ENCODE measurements at regions of chr18 and their contacts with region 1.

Region 1: DNA sequence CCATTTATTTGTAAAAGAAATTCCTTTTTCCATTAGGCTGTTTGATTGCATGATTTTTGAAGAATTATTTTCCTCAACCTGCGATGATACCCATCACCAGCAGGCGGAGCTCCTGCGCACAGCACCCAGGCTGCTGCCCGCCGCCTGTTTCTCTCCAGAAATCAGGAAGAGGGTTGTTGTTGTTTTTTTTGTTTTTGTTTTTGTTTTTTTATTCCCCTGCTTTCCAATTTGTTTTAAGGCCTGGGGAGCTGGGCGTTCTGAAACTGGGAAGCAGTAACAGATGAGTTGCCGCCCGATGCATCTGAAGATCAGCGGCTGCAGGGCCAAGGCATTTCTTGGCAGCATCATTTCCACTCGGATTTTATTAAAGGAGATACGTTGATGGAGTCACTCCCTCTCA is 132.1 kb downstream of the MBP start:
- DNase-seq: peak; percentile 60
- ATAC-seq: no peak
- H3K4me3 Mint-ChIP-seq: no peak overlapping the region
- H3K27ac Mint-ChIP-seq: peak overlapping the region; percentile 42
- H3K4me1 Mint-ChIP-seq: peaks cover 37% of the 10 kb centered on the region
- H3K27me3 Mint-ChIP-seq: no peaks in the 10 kb centered on the region

Region 2: DNA sequence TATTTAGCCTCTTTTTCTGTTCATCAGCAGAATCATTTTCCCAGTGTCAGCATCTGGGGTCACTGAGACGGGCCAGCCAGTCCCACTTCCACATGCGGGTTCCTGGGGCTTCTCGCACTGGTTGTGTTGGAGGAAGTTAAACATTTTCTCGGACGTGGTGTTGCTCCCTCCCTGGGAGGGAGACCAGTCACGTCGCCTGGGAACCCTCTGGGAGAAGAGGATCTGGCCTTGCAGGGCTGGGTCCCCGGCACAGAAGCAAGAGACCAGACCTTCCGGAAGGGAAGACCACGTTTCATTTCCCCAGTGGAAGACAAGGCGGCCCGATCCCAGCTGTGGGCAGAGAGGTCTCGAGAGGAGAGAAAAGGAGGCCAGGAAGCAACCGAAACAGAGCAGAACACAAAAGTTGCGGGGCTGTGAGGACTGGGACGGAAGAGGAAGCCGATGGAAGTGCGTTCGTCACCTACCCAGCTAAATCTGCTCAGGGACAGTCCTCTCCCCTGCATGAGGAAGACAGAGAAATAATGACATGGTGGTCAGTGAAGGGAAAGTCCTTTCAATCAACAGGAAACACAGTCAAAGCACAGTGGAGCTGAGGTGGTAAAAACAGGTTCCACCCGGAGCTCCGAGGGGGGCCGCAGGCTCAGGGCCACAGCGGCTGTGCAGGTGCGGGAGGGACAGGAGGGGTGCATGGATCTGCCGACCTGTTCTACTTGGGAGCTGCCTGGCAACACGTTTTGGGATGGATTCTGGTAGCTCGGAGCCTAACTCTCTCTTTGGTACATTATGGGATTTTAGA is 12.3 kb before region 1 on chr18:
- CTCF ChIA-PET with region 1: interaction called, 24 read pairs
- DNase-seq: no peak
- ATAC-seq: no peak
- H3K4me3 Mint-ChIP-seq: no peak overlapping the region
- H3K27ac Mint-ChIP-seq: no peak overlapping the region
- H3K4me1 Mint-ChIP-seq: peaks cover 6% of the 10 kb centered on the region
- H3K27me3 Mint-ChIP-seq: no peaks in the 10 kb centered on the region

Region 3: DNA sequence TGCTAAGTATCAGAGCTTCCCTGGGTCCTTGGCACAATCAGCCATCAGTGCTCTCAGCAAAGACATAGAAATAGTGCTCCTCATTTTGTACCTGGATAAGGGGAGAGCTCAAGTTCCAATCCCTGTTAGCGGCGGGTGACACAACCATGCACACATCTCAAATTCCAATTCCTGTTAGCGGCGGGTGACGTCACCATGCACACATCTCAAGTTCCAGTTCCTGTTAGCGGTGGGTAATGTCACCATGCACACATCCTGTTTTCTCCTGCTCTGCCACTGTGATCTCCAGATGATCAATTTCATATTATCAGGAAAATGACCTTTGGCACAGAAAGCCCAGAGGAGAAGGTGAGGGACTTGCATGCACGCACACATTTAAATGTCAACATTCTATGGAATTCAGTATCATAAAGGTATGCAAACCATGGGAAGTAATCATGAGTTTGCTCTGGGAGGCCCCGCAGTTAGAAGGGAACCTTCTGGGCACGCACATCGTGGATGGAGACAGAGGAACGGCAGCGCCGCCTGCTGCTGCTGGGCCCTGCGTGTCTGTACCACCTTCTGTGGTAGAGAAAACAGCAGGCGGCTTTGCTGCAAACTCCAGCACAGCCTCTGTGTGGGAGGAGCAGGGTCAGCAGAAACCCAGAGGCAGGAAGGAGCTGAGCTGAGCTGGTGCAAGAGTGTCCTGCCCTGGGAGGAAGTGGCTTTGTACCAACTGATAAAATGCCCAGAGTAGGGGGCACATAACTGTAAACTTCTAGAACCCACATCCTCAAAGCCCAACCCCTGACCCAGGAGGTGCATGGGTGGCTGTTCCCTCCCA is 54.3 kb after region 1 on chr18:
- CTCF ChIA-PET with region 1: interaction called, 97 read pairs
- DNase-seq: peak; percentile 95
- ATAC-seq: peak; percentile 88
- H3K4me3 Mint-ChIP-seq: peak overlapping the region; percentile 72
- H3K27ac Mint-ChIP-seq: peak overlapping the region; percentile 91
- H3K4me1 Mint-ChIP-seq: peaks cover 64% of the 10 kb centered on the region
- H3K27me3 Mint-ChIP-seq: no peaks in the 10 kb centered on the region

Region 4: DNA sequence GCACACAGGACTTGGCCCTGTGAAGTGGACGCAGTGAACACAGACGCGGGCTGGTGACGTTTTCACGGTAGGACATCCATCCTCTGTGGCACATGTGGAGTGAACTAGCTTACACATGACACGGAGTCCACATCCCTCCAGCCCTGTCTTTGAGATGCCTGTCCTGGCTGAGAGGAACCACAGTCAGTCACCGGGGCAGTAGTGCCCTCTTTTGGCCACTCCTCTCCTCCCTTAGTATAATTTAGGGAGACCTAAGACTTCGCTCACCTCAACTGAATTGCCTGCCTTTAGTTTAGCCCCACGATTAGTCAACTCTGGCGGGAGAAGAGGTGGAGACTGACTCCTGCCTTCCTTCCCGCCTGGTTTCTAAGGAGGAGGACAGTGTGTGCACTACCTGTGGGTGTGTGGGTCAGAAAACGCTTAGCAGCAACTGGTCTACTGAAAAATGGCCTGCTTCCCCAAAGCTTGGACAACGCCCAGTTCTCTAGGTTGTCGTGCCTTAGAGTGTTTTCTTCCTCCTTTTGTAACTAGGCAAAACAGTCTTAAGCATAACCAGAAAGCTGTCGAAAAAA is 61.5 kb after region 1 on chr18:
- CTCF ChIA-PET with region 1: interaction called, 97 read pairs
- DNase-seq: peak; percentile 66
- ATAC-seq: peak; percentile 18
- H3K4me3 Mint-ChIP-seq: peak overlapping the region; percentile 74
- H3K27ac Mint-ChIP-seq: peak overlapping the region; percentile 100
- H3K4me1 Mint-ChIP-seq: peaks cover 86% of the 10 kb centered on the region
- H3K27me3 Mint-ChIP-seq: no peaks in the 10 kb centered on the region

Region 5: DNA sequence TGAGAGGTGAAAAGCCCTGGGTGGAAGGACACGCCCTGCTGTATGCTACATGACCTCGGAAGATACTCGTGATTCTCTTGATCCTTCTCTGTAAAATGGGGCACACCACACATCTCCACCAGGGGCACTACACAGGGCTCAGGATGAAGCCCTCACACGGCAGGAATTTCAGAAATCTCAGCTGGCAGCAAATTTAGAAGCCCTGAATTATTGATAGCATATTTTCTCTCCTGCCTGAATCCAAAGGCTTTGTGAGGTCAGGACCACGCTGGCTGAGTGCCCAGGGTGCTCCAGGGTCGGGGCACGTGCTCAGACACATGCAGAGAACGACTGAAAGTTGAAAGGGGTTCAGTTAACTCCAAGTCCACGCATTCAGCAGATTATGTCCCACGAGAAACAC is 207.0 kb after region 1 on chr18:
- CTCF ChIA-PET with region 1: interaction called, 47 read pairs
- DNase-seq: peak; percentile 56
- ATAC-seq: peak; percentile 50
- H3K4me3 Mint-ChIP-seq: no peak overlapping the region
- H3K27ac Mint-ChIP-seq: no peak overlapping the region
- H3K4me1 Mint-ChIP-seq: peaks cover 47% of the 10 kb centered on the region
- H3K27me3 Mint-ChIP-seq: no peaks in the 10 kb centered on the region

Measured in activated CD8-positive, alpha-beta memory T cell treated with anti-CD3 and anti-CD28 coated beads, Interleukin-2, amount 10 ng/mL, durations not matched to agents 7 days and 5 days (primary cell).